ENCODE measurements at regions of chr16 and their contacts with region 1.

Region 1: DNA sequence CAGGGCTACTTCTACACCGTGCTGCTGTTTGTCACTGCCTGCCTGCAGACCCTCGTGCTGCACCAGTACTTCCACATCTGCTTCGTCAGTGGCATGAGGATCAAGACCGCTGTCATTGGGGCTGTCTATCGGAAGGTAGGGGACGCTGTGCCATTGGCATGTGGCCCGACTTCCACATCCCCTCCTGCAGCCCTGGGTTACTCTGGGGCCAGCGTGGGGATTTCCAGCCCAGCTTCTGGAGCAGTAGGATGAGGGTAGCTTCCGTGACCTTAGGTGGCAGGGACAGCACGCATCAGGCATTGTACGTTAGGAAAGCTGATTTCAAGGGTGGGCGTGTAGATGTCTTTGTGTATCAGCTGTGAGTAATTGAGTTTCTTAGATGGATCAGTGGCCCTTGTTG is 96.5 kb downstream of the ABCC1 start:
- DNase-seq: no peak
- ATAC-seq: no peak
- H3K4me3 ChIP-seq: peak overlapping the region; percentile 46; the same call in 1 of the 2 replicates
- H3K27ac ChIP-seq: peak overlapping the region; percentile 92
- H3K4me1 ChIP-seq: peaks cover 23% of the 10 kb centered on the region
- H3K27me3 ChIP-seq: no peaks in the 10 kb centered on the region
- CTCF ChIP-seq: no peak

Region 2: DNA sequence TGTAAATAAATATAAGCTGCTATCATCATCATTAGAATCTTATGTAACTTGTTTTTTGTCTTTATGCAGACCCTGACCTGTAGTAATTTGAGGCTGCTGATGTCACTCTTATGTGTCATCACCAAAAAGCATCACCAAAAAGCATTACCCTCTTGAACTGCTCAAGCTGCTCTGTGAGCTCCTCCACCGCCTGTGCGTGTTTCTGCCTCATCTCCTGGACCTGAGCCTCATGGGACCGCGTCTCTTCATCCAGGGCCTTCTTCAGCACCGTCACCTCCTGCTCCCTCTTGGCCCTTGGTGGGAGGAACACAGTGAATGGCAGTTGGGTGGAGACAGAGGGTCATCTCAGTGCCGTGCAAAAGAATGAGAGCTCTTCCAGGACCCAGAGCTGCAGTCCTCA is 313.5 kb before region 1 on chr16:
- CTCF ChIA-PET with region 1: interaction called, 11 read pairs
- POLR2A ChIA-PET with region 1: no interaction called
- intact Hi-C with region 1: no loop called
- DNase-seq: no peak
- ATAC-seq: no peak
- H3K4me3 ChIP-seq: no peak overlapping the region
- H3K27ac ChIP-seq: no peak overlapping the region
- H3K4me1 ChIP-seq: peaks cover 10% of the 10 kb centered on the region
- H3K27me3 ChIP-seq: no peaks in the 10 kb centered on the region
- CTCF ChIP-seq: no peak

Measured in PC-3 (cell line).